Mucosa of descending colon (tissue), 3 donors: ENCODE measurements at regions of chr1 and their contacts with region 1.

Region 1: GRCh38 chr1:174769961-174770549 is 229.7 kb upstream of the CACYBP start:
- DNase-seq: peak in 1 of 3 donors; percentile 38
- ATAC-seq: peak; percentile 40
- H3K4me3 ChIP-seq: no peak overlapping the region
- H3K4me1 ChIP-seq: peaks cover 4% of the 10 kb centered on the region
- CTCF ChIP-seq: peak; percentile 36

Region 2: GRCh38 chr1:174676856-174677255 is 93.2 kb before region 1 on chr1:
- intact Hi-C with region 1: no loop called
- DNase-seq: no peak
- ATAC-seq: no peak
- H3K4me3 ChIP-seq: no peak overlapping the region
- H3K4me1 ChIP-seq: no peaks in the 10 kb centered on the region
- CTCF ChIP-seq: no peak

Region 3: GRCh38 chr1:174999216-174999925 is 229.3 kb after region 1 on chr1:
- intact Hi-C with region 1: loop called in 1 of 2 experiments (anchors 10 kb)
- DNase-seq: peak; percentile 98 to 99 (median 98)
- ATAC-seq: peak; percentile 89
- H3K4me3 ChIP-seq: peak overlapping the region; percentile 92
- H3K4me1 ChIP-seq: peaks cover 31% of the 10 kb centered on the region
- CTCF ChIP-seq: no peak